CD4-positive, alpha-beta memory T cell (primary cell): ENCODE measurements at regions of chr13 and their contacts with region 1.

Region 1: DNA sequence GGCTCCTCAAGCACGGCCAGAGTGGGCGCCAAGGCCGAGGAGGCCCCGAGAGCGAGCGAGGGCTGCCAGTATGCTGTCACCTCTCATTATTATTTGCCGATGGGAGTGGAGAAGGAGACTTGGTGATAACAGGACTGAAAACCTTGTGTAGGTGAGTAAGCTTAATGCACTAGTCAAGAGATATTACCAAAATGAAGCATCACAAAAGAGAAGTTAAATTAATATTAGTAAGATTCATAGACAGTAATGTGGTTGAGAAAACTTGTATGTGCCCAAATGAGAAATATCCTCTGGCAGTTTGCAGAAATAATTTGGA is 204.5 kb upstream of the SLITRK1 start:
- DNase-seq: no peak
- H3K4me3 ChIP-seq: no peak overlapping the region
- H3K4me3 Mint-ChIP-seq: peak overlapping the region in 4 of 8 donors; percentile 10 to 35 (median 18)
- H3K27ac ChIP-seq: no peak overlapping the region
- H3K27ac Mint-ChIP-seq: no peak overlapping the region
- H3K4me1 ChIP-seq: no peaks in the 10 kb centered on the region
- H3K4me1 Mint-ChIP-seq: no peaks in the 10 kb centered on the region
- H3K27me3 ChIP-seq: no peaks in the 10 kb centered on the region
- H3K27me3 Mint-ChIP-seq: no peaks in the 10 kb centered on the region

Region 2: GRCh38 chr13:84137292-84137691 is 50.5 kb after region 1 on chr13:
- CTCF ChIA-PET with region 1: interaction called, 3 read pairs
- POLR2A ChIA-PET with region 1: interaction called, 12 read pairs
- intact Hi-C with region 1: no loop called
- DNase-seq: peak; percentile 69 to 83 (median 80)
- H3K4me3 ChIP-seq: peak overlapping the region in 1 of 2 donors; percentile 49
- H3K4me3 Mint-ChIP-seq: peak overlapping the region; percentile 56 to 85 (median 76)
- H3K27ac ChIP-seq: peak overlapping the region; percentile 59
- H3K27ac Mint-ChIP-seq: peak overlapping the region; percentile 75 to 96 (median 86)
- H3K4me1 ChIP-seq: peaks cover 27% of the 10 kb centered on the region
- H3K4me1 Mint-ChIP-seq: peaks cover 17 to 32% (median 24%) of the 10 kb centered on the region in 4 donors
- H3K27me3 ChIP-seq: no peaks in the 10 kb centered on the region
- H3K27me3 Mint-ChIP-seq: no peaks in the 10 kb centered on the region